ENCODE measurements at regions of chr7 and their contacts with region 1.

Region 1: GRCh38 chr7:24325708-24326107 is 41.7 kb downstream of the NPY start:
- DNase-seq: peak; percentile 75
- ATAC-seq: peak; percentile 95
- H3K4me3 ChIP-seq: peak overlapping the region; percentile 45
- H3K27ac ChIP-seq: peak overlapping the region; percentile 83
- H3K4me1 ChIP-seq: peaks cover 11% of the 10 kb centered on the region
- H3K27me3 ChIP-seq: no peaks in the 10 kb centered on the region
- CTCF ChIP-seq: no peak
- EP300 ChIP-seq: 0 out of 4 replicates have a peak, but pooled peaks of 1 of the 2 experiments have one; percentile 23
- POLR2A ChIP-seq: no peak
- RAD21 ChIP-seq: no peak

Region 2: GRCh38 chr7:24336461-24336860 is 10.8 kb after region 1 on chr7:
- CTCF ChIA-PET with region 1: interaction called, 3 read pairs
- POLR2A ChIA-PET with region 1: no interaction called
- RAD21 ChIA-PET with region 1: no interaction called
- SMC1A ChIA-PET with region 1: interaction called, 10 read pairs
- in situ Hi-C with region 1: no loop called
- intact Hi-C with region 1: no loop called
- DNase-seq: no peak
- ATAC-seq: no peak
- H3K4me3 ChIP-seq: no peak overlapping the region
- H3K27ac ChIP-seq: no peak overlapping the region
- H3K4me1 ChIP-seq: no peaks in the 10 kb centered on the region
- H3K27me3 ChIP-seq: no peaks in the 10 kb centered on the region
- CTCF ChIP-seq: no peak
- EP300 ChIP-seq: no peak
- POLR2A ChIP-seq: no peak
- RAD21 ChIP-seq: no peak

Measured in GM12878 (cell line).